ENCODE measurements at regions of chr4 and their contacts with region 1.

Region 1: DNA sequence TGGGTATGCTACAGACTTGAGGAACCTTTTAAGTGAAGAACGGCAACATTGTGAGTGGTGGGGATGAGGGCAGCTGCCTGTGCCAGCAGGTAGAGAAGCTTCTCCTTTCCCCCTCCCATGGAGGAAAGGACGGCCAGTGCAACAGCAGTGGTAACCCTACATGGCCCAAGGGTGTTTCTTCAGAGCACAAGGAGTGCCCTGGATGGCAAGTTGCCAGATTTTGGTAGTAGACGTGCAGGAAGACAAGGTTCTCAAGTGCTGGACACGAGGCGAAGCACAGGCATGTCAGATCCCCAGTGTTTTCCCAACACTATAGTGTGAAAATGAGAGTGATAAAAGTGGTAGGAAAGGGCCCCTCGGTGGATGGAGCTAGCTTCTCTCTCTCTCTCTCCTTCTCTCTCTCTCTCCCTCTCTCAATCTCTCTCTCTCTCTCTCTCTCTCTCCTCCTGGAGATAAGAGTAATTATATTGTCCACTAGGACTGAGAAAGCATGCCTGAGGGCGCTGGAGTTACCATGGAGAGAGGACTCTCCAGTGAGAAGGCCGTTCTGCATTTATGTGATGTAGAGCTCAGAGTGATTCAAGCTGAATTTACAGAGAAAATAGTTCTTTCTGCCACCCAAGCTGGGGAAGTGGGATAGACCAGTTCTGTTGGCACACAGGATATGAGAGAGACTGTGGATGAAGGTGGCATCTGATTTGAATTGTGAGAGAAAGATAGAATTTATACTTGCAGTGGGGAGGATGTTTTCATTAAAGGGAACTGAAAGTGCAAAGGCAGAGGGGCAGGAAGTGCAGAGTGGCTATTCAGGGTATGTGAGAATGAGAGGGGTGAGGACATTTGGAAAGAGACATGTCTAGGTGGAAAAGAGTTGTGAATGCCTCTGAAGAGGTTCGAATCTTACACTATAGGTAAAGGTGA is 25.7 kb upstream of the TRPC3 start:
- DNase-seq: no peak

Region 2: GRCh38 chr4:122119739-122120138 is 142.2 kb after region 1 on chr4:
- intact Hi-C with region 1: loop called in 1 of 2 experiments (anchors 5 kb)
- DNase-seq: no peak

Region 3: DNA sequence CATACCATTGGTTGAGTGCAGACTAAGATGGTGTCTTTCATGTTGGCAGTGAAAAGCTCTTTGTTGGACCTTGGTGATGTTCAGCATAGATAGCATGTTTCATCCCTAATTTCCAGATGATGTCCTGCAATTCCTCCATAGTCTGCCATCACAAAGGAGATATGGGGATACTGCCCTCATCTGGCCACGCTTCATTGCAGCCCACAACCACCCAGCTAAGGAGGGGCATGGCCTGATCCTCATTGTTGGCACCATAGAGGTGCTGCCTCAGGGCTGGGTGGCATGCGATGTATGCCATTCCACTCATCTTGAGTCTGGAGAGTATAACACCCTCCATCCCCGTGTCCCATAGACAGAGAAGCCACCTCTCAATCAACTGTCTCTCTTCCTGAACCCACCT is 976.4 kb after region 1 on chr4:
- intact Hi-C with region 1: loop called in 1 of 2 experiments (anchors 5 kb)
- DNase-seq: no peak